Right cardiac atrium (tissue), 5 donors: ENCODE measurements at regions of chr1 and their contacts with region 1.

Region 1: DNA sequence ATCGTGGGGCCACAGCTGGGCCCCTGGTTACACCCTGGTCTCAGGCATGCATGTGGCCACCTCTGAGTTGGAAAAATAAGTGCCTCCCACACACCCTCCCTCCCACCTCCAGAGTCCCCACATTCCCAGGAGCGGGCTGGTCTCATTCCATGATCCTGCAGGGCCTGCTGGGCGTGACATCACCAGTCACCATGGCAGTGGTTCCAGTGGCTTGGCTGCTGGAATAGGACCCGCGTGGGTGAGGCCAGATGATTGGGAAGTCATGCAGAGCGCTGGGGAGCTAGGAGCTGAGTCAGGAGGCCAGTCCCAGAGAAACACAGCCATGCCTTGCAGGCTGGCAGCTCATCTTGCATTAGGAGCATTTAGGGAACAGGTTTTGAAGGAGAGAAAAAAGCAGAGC is 125.4 kb upstream of the TMEM51 start:
- DNase-seq: peak; percentile 75 to 88 (median 80)
- ATAC-seq: peak; percentile 66 to 71
- H3K4me3 ChIP-seq: no peak overlapping the region
- H3K27ac ChIP-seq: no peak overlapping the region
- H3K4me1 ChIP-seq: no peaks in the 10 kb centered on the region
- H3K27me3 ChIP-seq: no peaks in the 10 kb centered on the region

Region 2: DNA sequence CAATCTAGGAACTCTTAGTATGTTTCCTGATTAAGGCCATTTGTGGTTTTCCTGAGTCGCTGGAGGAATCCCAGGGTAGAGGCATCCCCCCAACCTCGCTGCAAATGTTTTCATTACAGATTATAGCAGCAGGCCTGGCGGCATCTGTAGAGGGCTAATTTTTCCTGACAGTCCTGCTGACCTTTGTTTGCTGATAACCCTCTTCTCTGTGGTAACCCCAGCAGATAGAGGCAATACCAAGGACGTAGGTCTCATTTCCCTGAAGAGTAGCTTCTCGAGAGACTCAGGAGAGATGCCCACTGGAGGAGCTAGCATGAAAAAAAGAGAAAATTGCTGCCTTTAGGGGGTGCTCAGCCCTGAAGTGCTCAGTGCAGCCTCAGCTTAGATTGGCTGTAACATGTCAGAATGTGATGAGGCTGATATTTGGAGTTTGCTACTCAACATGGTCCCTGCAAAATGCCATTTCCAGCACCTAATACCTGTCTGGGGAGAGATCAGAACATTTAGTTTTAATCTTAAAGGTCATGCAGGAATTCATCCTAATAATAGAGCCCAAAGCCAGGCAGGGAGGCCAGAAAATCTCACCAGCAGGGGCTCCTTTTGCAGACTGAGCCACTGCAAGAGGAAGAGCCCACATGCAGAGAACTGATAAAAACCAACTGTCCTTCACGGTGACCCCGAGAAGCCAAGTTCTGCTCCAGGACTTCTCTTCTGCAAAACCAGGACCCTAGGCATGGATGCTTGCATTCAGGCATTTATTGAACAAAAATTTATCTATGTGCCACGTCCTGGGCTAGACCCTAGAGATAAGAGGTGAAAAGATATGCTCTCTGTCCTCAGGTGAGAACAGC is 245.1 kb before region 1 on chr1:
- intact Hi-C with region 1: loop called in 1 of 4 experiments (anchors 5 kb)
- DNase-seq: no peak
- ATAC-seq: peak in 1 of 2 donors; percentile 35
- H3K4me3 ChIP-seq: no peak overlapping the region
- H3K27ac ChIP-seq: no peak overlapping the region
- H3K4me1 ChIP-seq: no peaks in the 10 kb centered on the region
- H3K27me3 ChIP-seq: no peaks in the 10 kb centered on the region

Region 3: GRCh38 chr1:14915356-14916054 is 112.6 kb before region 1 on chr1:
- intact Hi-C with region 1: loop called in 3 of 4 experiments (anchors 2 to 10 kb)
- DNase-seq: peak in 2 of 3 donors; percentile 69 to 76
- ATAC-seq: peak; percentile 42 to 64
- H3K4me3 ChIP-seq: no peak overlapping the region
- H3K27ac ChIP-seq: no peak overlapping the region
- H3K4me1 ChIP-seq: no peaks in the 10 kb centered on the region
- H3K27me3 ChIP-seq: no peaks in the 10 kb centered on the region

Region 4: DNA sequence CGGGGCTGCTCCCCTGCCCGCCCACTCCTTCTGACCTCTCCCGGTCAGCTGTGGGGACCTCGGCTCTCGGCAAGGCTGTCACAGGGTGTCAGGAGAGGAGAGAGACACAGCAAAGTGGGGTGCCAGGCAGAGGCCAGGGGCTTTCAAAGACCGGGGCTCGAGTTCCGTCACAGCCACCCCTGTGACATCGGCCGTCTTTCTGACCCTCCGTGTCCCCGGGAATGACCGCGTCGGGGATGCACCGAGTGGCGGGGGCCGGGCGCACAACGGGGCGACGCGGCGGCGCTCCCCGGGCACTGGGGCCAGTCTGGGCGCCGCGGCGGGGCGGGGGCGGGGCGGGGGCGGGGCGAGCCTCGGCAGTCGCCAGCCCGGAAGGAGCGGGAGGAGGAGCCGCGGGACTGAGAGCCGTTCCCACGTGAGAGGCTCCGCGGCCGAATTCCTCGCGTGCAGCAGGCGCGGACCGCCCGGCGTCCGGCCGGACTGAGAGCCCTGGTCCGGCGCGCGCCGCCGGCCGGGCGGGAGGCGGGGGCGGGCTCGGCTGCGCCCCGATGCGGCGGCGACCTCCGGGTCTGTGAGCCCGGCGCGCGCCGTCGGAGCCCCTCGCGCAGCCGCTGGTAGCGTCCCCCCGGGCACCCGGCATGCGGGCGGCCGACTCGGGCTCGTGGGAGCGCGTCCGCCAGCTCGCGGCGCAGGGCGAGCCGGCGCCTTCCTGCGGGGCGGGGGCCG is 104.2 kb before region 1 on chr1:
- intact Hi-C with region 1: loop called in 3 of 4 experiments (anchors 5 to 10 kb)
- DNase-seq: peak; percentile 81 to 91 (median 90)
- ATAC-seq: peak; percentile 77 to 83
- H3K4me3 ChIP-seq: peak overlapping the region; percentile 94
- H3K27ac ChIP-seq: no peak overlapping the region
- H3K4me1 ChIP-seq: peaks cover 7% of the 10 kb centered on the region
- H3K27me3 ChIP-seq: no peaks in the 10 kb centered on the region